ENCODE measurements at regions of chr13 and their contacts with region 1.

Region 1: GRCh38 chr13:113029487-113030258 is 60.7 kb downstream of the MCF2L start:
- DNase-seq: peak; percentile 90
- ATAC-seq: peak; percentile 92
- H3K4me3 Mint-ChIP-seq: no peak overlapping the region
- H3K27ac Mint-ChIP-seq: no peak overlapping the region
- H3K4me1 Mint-ChIP-seq: no peaks in the 10 kb centered on the region
- H3K27me3 Mint-ChIP-seq: no peaks in the 10 kb centered on the region
- CTCF ChIP-seq: peak; percentile 89

Region 2: DNA sequence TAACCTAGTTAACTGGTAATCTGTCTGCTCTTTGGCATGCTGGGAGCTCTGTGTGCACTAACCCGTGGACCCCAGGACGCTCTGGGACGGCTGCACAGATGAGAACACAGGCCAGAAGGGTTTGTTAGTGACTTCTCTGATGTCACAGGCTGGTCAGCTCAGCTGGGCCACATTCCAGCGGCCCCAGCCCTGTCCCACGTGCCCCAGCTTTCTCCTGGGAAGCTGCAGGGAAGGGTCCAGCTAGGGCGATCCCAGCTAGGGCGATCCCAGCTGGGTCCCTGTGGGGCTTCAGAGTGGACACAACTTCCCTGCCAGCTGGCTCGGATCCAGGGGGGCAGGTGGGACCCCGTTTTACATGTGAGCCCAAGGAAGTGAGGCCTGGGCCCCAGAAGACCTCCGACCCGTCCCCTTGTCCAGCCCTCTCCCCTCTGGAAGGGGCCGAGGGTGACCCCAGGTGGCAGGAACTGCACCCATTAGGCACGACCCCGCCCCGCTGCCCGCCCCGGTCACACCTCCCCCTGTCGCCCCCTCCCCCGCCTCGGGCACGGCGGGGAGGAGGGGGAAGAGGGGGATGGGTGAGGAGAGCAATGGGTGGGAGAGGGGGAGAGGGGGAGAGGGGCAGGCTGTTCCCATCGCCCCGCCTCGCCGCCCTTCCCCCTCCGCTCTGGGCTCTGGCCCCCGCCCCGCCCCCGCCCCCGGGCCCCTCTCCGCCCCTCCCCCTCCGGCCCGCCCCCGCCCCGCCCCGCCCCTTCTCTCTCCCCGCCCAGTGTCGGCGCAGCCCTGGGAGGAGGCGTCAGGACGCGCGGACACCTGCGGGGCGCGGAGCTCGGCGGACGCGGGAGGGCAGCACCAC is 135.9 kb before region 1 on chr13:
- CTCF ChIA-PET with region 1: no interaction called
- POLR2A ChIA-PET with region 1: no interaction called
- DNase-seq: peak; percentile 67
- ATAC-seq: peak; percentile 53
- H3K4me3 Mint-ChIP-seq: peak overlapping the region; percentile 64
- H3K27ac Mint-ChIP-seq: peak overlapping the region; percentile 86
- H3K4me1 Mint-ChIP-seq: peaks cover 44% of the 10 kb centered on the region
- H3K27me3 Mint-ChIP-seq: peaks cover 40% of the 10 kb centered on the region
- CTCF ChIP-seq: no peak

Region 3: DNA sequence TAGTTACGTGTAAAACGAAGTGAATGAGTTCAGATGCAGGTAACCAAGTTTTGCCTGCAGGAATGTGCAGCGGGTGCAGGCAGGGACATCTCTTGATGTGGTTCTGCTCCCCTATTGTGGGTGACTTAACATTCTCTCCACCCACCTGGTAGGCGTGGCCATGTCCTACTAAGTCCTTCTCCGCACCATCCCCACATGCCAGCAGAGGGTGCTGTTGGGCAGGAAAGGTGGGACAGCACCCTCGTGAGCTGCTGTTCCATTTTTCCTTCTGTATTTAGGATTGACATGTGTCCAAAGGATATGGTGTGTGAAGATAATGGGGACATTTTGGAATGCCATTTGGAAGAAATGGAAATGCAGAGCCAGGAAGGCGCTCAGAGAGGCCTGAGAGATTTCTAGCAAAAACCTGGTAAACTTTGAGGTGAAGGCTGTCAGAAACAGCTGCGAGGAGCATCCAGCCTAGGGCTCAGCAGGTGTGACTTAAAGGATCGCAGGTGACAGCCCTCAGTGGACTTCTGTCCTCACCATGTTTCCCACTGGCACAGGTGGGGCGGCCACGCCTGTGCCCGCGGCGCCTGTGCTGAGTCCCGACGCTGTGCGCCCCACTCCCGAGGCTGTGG is 86.9 kb before region 1 on chr13:
- CTCF ChIA-PET with region 1: interaction called, 72 read pairs
- POLR2A ChIA-PET with region 1: no interaction called
- DNase-seq: peak; percentile 99
- ATAC-seq: peak; percentile 79
- H3K4me3 Mint-ChIP-seq: peak overlapping the region; percentile 76
- H3K27ac Mint-ChIP-seq: no peak overlapping the region
- H3K4me1 Mint-ChIP-seq: peaks cover 17% of the 10 kb centered on the region
- H3K27me3 Mint-ChIP-seq: 0 out of 2 replicates have a peak, but pooled peaks cover 3% of the 10 kb centered on the region
- CTCF ChIP-seq: peak; percentile 82

Region 4: GRCh38 chr13:112968908-112969691 is 60.6 kb before region 1 on chr13 and contains the start of gene MCF2L:
- CTCF ChIA-PET with region 1: interaction called, 42 read pairs
- POLR2A ChIA-PET with region 1: no interaction called
- DNase-seq: no peak
- ATAC-seq: peak; percentile 62
- H3K4me3 Mint-ChIP-seq: peak within 1 kb of the TSS; percentile 83
- H3K27ac Mint-ChIP-seq: peak within 1 kb of the TSS; percentile 80
- H3K4me1 Mint-ChIP-seq: peaks cover 11% of the 10 kb centered on the region
- H3K27me3 Mint-ChIP-seq: peaks cover 16% of the 10 kb centered on the region
- CTCF ChIP-seq: no peak
- total RNA-seq, gene MCF2L: 34.8 to 35.4 TPM (median 34.9 TPM) in 3 replicates

Region 5: DNA sequence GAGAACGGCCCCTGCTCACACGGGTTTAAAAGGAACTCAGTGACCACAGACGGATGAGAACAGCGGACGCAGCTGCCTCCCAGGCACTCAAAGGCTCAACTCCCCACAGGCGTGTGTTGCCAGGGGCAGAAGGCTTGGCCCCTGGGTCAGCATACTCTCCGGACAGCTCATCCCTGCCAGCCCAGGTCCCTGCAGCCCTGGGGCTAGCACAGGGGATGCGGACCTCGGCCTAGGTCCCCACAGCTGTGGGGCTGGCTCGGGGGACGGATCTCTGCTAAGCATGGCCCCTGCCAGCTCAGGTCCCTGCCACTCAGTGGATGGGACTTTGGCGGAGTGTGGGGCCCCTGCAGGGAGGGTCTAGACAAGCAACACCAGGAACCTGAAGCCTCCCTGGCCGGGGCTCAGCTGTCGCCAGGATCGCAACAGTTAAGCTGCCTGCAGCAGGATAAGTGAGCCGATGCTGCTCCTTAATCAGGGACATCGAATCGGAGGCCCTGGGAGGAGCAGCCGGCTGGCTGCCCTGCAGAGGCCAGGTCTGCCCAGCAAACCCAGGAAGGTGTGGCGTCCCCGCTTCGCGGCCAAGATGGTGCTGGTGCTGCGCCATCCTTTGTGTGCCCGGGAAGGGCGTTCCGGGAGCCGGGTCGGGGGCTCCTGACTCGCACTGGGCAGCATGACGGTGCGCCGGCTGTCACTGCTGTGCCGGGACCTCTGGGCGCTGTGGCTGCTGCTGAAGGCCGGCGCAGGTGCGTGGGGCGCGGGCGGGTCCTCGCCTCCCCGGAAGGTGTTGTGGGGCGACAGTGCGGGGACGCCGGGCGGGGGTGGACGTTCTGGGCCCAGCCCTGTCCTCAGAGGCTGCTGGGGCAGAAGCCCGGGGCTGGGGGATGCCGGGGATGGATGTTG is 28.2 kb before region 1 on chr13:
- CTCF ChIA-PET with region 1: interaction called, 15 read pairs
- POLR2A ChIA-PET with region 1: no interaction called
- DNase-seq: no peak
- ATAC-seq: peak; percentile 31
- H3K4me3 Mint-ChIP-seq: no peak overlapping the region
- H3K27ac Mint-ChIP-seq: peak overlapping the region; percentile 27; the same call in 1 of the 2 replicates
- H3K4me1 Mint-ChIP-seq: peaks cover 2% of the 10 kb centered on the region; the same call in 1 of the 2 replicates
- H3K27me3 Mint-ChIP-seq: no peaks in the 10 kb centered on the region
- CTCF ChIP-seq: no peak

Region 6: GRCh38 chr13:113058988-113059850 is 29.5 kb after region 1 on chr13:
- CTCF ChIA-PET with region 1: interaction called, 10 read pairs
- POLR2A ChIA-PET with region 1: no interaction called
- DNase-seq: no peak
- ATAC-seq: no peak
- H3K4me3 Mint-ChIP-seq: no peak overlapping the region
- H3K27ac Mint-ChIP-seq: no peak overlapping the region
- H3K4me1 Mint-ChIP-seq: peaks cover 7% of the 10 kb centered on the region
- H3K27me3 Mint-ChIP-seq: no peaks in the 10 kb centered on the region
- CTCF ChIP-seq: no peak

Measured in WTC11 (cell line).